Activated T-helper 1 cell treated with anti-CD3 and anti-CD28 coated beads, Interleukin-12 subunit alpha, Interleukin-12 subunit beta, Interleukin-2, Interleukin-4 antibody, amounts not matched to agents 30 ng/mL and 10 ng/mL and 1 ng/mL, durations not matched to agents 14 hours and 24 hours and 36 hours (primary cell): ENCODE measurements at regions of chr19 and their contacts with region 1.

Region 1: DNA sequence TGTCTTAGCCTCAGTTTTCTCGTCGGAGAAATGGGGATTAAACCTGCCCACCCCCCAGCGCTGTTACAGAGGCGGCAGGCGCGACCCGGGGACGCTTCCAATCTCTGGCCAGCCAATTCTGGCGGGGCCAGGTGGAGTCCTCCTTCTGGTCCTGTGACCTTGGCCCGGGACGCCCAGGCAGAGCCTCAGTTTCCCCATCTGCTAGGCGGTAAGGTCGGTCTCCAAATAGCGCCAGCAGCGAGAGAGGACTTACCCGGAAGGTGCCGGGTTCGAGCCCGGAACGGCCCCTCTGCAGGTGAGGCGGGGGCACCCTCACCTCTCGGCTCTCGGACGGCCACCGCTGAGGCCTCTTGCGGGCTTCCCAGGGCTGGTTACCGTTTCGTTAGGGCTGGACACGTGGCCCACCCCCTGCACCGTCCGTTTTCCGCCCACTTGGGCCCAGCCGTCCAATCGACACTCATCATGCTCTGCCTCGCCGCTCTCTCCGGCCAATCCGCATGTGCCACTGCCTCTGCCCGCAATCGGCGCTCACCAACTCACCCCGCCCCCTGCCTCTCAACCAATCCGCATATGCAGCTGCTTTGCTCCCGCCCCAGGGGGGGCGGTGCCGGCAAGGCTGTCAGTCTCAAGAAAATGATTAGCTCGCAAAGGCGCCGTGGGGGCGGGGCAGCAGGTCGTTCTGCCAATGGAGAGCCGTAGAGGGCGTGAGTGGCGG is at the start of gene ISOC2:
- DNase-seq: peak; percentile 100
- H3K4me3 Mint-ChIP-seq: peak within 1 kb of the TSS; percentile 81
- H3K27ac Mint-ChIP-seq: peak within 1 kb of the TSS; percentile 77
- H3K4me1 Mint-ChIP-seq: peaks cover 5% of the 10 kb centered on the region
- H3K27me3 Mint-ChIP-seq: peaks cover 2% of the 10 kb centered on the region
- total RNA-seq, gene ISOC2: 31.3 and 34.3 TPM in 2 replicates

Region 2: DNA sequence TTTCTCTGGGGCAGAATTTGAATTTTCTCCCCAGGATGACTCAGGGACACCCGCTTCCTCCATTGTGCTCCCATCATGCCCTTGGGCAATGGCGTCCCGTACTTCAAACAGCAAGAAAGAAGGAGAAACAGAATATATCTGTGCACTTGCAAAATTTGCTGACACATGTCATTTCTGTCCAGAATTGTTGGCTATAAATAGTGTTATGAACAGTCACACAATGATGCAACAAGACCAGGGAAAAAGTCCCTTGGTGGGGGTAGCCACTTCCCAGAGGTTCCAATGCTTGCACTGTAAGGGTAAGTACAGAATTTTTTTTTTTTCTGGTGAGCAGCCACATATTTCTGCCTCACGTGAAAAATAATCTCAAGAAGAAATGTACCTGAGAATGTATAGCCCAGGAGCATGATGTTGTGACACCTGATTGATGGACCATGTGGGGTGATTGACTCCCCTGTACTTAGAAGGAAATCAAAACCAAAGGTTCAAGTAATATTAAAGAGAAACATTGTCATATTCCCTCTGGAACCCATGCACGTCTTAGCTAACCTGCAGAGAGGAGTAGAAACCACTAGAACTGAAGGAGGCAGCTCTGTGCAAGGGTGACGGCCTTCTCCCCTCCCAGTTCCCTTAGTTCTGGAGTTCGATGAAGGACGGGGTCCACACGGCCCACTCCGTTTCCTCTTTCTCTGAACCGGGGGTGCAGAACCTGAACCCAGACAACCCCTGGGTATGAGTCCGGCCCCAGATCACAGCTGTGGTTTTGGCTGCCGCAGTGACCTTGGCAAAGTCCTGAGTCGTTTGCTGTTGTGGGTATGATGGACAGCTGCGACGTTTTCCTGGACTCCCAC is 1087.4 kb before region 1 on chr19:
- intact Hi-C with region 1: no loop called
- DNase-seq: no peak
- H3K4me3 Mint-ChIP-seq: peak overlapping the region; percentile 87
- H3K27ac Mint-ChIP-seq: peak overlapping the region; percentile 18
- H3K4me1 Mint-ChIP-seq: peaks cover 76% of the 10 kb centered on the region
- H3K27me3 Mint-ChIP-seq: peaks cover 23% of the 10 kb centered on the region

Region 3: DNA sequence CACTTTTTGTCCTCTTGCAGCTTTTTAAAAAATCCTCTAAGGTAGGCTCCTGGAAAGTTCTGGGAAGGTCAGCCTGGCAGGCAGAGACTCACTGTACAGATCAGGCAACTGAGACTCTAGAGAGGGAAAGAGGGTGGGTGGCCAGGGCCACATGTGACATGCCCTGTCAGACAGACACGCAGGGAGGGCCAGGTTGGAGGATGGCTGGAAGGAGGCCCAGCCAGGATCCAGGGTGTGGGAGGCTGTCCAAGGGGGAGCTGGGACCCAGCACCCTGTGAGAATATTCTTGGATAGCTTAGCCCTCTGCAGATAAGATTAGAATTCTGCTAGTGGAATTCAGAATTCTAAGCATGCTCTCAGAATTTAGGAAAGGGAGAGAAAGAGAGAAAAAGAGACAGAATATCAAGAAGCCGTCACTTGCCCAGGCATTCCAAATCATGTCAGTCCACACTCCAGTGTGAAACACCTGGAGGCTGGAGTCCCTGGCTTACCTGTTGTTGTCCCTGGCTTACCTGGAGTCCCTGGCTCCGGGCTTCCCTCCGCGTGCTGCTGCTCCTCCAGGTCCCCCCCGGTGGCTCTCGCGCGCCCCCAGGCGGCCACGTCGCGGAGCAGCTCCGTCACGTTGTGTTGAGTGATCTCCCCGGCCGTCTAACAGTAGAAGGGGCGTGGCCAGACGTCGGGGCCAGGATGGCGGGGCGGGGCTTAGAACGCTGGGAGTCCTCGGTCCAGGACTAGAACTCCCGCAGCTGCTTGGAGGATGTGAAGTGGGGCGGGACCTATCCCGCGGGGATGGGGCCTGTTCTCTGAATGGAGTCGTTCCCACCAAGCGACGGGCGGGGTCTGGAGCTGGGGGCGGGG is 301.1 kb before region 1 on chr19:
- intact Hi-C with region 1: loop called (anchors 1 kb)
- DNase-seq: peak; percentile 86
- H3K4me3 Mint-ChIP-seq: no peak overlapping the region
- H3K27ac Mint-ChIP-seq: no peak overlapping the region
- H3K4me1 Mint-ChIP-seq: no peaks in the 10 kb centered on the region
- H3K27me3 Mint-ChIP-seq: peaks cover 46% of the 10 kb centered on the region

Region 4: GRCh38 chr19:55418185-55418584 is 43.2 kb before region 1 on chr19:
- intact Hi-C with region 1: no loop called
- DNase-seq: peak; percentile 37
- H3K4me3 Mint-ChIP-seq: no peak overlapping the region
- H3K27ac Mint-ChIP-seq: no peak overlapping the region
- H3K4me1 Mint-ChIP-seq: peaks cover 8% of the 10 kb centered on the region
- H3K27me3 Mint-ChIP-seq: peaks cover 13% of the 10 kb centered on the region

Region 5: DNA sequence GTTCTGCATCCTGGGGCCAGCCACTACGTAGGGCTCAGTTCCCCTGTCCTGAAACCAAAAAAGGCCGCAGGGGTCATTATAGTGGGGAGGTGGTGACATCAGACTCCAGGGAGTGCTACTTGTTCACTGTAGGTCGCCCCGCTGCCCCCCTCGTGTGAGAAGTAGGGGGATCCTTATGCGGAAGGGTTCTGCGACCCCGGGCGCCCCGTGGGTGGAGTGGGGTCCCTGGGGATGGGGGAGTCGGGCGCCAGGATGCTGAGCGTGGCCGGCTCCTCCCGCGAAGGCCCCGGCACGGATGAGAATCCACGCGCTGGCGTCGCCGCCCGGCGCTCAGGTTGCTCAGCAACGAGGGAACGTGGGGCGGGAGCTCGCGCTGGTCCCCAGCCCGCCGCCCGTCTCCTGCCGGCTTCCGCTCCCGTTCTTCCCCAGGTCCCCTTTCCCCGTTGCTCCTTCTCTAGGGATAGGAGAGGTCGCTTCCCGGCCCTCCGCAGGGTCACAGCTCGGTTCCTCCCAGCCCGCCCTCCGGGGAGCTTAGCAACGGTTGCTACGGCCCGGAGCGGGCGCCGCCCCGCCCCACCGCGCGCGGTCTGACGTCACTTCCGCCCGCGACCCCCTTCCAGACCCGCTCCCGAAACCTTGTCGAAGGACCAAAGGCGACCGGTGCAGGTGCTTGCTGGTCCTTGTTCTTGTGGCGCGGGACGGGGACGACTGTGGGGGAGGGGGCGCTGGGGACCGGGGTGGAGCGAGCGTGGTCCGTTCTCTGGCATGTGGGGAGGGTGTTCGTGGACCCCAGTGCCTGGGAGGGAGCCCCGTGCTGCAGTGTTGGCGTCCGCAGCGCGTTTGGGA is 23.4 kb after region 1 on chr19 and contains the start of gene NAT14:
- intact Hi-C with region 1: loop called (anchors 1 kb)
- DNase-seq: peak; percentile 64
- H3K4me3 Mint-ChIP-seq: peak within 1 kb of the TSS; percentile 80
- H3K27ac Mint-ChIP-seq: peak within 1 kb of the TSS; percentile 55
- H3K4me1 Mint-ChIP-seq: peaks cover 11% of the 10 kb centered on the region
- H3K27me3 Mint-ChIP-seq: no peaks in the 10 kb centered on the region
- total RNA-seq, gene NAT14: 23.1 and 26.1 TPM in 2 replicates

Region 6: GRCh38 chr19:55516878-55517620 is 55.6 kb after region 1 on chr19:
- intact Hi-C with region 1: loop called (anchors 2 kb)
- DNase-seq: peak; percentile 88
- H3K4me3 Mint-ChIP-seq: peak overlapping the region; percentile 66
- H3K27ac Mint-ChIP-seq: peak overlapping the region; percentile 68
- H3K4me1 Mint-ChIP-seq: no peaks in the 10 kb centered on the region
- H3K27me3 Mint-ChIP-seq: peaks cover 2% of the 10 kb centered on the region

Region 7: DNA sequence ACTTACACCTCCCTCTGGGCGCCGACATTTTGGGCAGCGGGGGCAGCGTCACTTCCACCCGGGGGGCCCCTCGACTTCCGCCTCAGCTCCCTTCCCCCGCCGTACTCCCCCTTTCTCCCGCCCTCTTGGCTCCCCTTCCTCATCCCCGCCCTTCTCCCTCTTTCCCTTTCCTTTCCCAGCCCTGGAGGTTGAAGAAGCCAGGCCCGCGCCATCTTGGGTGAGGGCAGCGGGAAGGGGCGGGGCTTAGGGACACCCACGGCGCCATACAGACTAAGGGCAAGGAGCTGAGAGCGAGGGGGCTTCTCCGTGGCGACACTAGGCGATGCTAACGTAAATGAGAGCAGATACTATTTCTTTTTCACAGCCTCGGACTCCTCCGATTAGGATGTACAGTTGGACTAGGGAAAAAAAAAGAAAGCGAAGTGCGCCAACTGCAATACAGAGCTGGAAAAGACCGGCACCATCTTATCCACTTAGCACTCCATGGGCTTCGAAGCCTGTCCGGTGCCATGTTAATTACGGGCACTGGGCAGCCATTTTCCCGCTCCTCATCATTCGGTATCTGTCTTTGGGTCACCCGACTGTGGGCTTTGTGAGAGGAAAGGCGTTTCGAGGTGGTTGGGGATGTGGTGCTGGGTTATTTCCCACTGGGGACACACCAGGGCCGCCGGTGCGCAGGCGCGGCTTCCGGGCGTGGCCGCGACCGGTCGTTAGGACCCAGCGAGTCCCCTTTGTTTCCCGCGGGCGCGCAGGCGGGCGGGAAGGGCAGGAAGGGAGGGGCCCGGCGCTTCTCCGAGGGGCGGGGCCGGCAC is 138.3 kb after region 1 on chr19 and contains the start of gene FIZ1:
- intact Hi-C with region 1: loop called (anchors 1 kb)
- DNase-seq: peak; percentile 95
- H3K4me3 Mint-ChIP-seq: peak within 1 kb of the TSS; percentile 93
- H3K27ac Mint-ChIP-seq: peak within 1 kb of the TSS; percentile 98
- H3K4me1 Mint-ChIP-seq: peaks cover 28% of the 10 kb centered on the region
- H3K27me3 Mint-ChIP-seq: no peaks in the 10 kb centered on the region
- total RNA-seq, gene FIZ1: 24.2 and 24.7 TPM in 2 replicates